ENCODE measurements at regions of chr1 and their contacts with region 1.

Region 1: GRCh38 chr1:13748610-13749505 is 48.9 kb downstream of the PRDM2 start:
- DNase-seq: peak; percentile 96 to 98 (median 98)
- H3K4me3 ChIP-seq: peak overlapping the region; percentile 58 to 97 (median 86)
- H3K27ac ChIP-seq: peak overlapping the region in 58 of 59 donors; percentile 14 to 97 (median 89)
- H3K27me3 ChIP-seq: no peaks in the 10 kb centered on the region
- CTCF ChIP-seq: peak in 27 of 56 donors; percentile 8 to 46 (median 25)

Region 2: DNA sequence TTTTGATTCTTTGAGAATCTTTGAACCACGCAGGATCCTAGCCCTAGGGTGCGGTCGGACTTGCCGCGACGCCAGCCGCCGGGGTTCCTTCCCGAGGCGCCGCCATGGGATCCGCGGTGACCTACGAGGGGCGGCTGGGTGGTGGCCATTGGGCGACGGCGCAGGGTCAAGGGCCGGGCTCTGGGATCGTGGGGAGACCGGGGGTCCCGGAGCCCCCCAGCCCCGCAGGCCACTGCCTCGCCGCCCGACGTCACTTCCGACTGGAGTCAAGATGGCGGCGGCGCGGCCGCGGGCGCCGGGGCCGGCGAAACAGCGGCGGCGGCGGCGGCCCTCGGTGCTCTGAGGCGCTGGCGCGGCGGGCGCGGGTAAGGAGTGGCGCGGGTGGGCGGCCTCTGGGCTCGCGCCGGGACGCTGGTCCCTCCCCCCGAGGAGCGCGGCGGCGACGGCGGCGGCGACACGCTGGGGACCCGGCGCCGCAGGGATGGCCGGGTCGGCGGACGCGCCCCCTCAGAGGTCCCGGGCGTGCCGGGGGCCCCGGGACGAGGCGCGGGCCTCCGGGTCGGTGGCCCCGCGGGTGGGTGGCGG is 48.8 kb before region 1 on chr1 and contains the start of gene PRDM2:
- intact Hi-C with region 1: loop called (anchors 2 to 5 kb)
- DNase-seq: peak in 7 of 10 donors; percentile 20 to 68 (median 39)
- H3K4me3 ChIP-seq: peak within 1 kb of the TSS; percentile 59 to 96 (median 82)
- H3K27ac ChIP-seq: peak within 1 kb of the TSS; percentile 75 to 98 (median 93)
- H3K27me3 ChIP-seq: no peaks in the 10 kb centered on the region
- CTCF ChIP-seq: no peak
- total RNA-seq, gene PRDM2: 86.9 to 190 (median 133) TPM

Measured in dorsolateral prefrontal cortex (tissue), 120 donors.